ENCODE measurements at regions of chr17 and their contacts with region 1.

Region 1: GRCh38 chr17:28571255-28572122 is at the start of gene PIGS:
- DNase-seq: peak; percentile 91
- H3K4me3 Mint-ChIP-seq: peak within 1 kb of the TSS; percentile 93
- H3K27ac Mint-ChIP-seq: peak within 1 kb of the TSS; percentile 85
- H3K4me1 Mint-ChIP-seq: peaks cover 24% of the 10 kb centered on the region
- H3K27me3 Mint-ChIP-seq: no peaks in the 10 kb centered on the region
- CTCF ChIP-seq: no peak
- total RNA-seq, gene PIGS: 50.5 and 56.1 TPM in 2 replicates

Region 2: DNA sequence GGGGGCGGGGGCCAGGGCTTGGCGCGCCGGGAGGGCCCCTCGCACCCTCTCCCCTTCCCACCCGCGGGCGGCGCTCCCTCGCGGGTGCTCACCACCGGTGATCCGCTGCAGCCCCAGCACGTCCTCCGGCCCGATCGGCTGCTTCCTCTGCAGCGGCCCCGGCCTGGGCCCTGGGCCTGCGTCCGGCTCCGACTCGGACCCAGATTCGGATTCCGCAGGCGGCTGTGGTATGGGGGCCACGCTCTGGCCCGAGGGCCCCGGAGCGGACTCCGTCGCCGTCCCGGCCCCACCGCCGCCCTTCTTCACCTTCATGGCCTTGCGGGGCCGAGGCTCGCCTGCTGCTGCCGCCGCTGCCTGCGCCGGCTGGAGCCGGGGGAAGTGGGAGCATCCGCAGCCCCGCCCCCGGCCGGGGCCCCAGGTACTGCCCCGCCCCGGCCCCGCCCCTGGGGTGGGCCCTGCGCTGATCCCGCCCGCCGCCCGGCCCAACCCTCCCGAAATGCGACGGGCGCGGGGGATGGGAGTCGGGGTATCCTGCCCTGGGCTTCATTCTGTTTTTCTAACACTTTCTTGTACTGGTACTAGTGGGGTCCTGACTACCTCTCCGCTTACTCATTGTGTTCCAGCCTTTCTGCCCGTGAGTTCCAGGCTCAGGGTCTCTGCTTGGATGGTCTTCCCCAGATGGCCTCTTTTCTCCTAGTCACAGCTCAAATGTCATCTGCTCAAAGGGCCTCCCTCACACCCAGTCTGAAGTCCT is 19.1 kb before region 1 on chr17 and contains the start of gene UNC119:
- CTCF ChIA-PET with region 1: interaction called, 4 read pairs
- POLR2A ChIA-PET with region 1: interaction called, 18 read pairs
- intact Hi-C with region 1: no loop called
- DNase-seq: peak; percentile 74
- H3K4me3 Mint-ChIP-seq: peak within 1 kb of the TSS; percentile 75
- H3K27ac Mint-ChIP-seq: no peak within 1 kb of the TSS
- H3K4me1 Mint-ChIP-seq: no peaks in the 10 kb centered on the region
- H3K27me3 Mint-ChIP-seq: no peaks in the 10 kb centered on the region
- CTCF ChIP-seq: no peak
- total RNA-seq, gene UNC119: 12.5 and 13.7 TPM in 2 replicates

Region 3: DNA sequence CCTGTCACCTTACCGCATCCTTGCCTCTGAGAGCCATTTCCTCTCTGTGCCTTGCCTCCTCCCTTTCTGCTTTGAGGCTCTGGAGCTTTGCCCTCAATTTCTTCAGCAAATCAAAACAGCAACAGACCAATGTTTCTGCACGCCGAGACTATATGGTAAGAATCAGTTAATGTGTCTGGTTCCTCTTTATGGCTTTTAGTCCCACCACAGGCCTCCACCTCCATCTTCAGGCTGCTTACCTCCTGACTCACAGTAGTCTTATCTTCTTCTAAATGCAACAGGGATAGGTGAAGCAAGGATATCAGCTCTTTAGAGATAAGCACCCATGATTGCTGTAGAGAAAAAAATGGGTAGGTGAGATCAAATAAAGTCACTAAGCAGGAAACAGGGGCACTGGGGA is 14.4 kb after region 1 on chr17:
- CTCF ChIA-PET with region 1: interaction called, 3 read pairs
- POLR2A ChIA-PET with region 1: interaction called, 19 read pairs
- intact Hi-C with region 1: no loop called
- DNase-seq: no peak
- H3K4me3 Mint-ChIP-seq: no peak overlapping the region
- H3K27ac Mint-ChIP-seq: no peak overlapping the region
- H3K4me1 Mint-ChIP-seq: no peaks in the 10 kb centered on the region
- H3K27me3 Mint-ChIP-seq: no peaks in the 10 kb centered on the region
- CTCF ChIP-seq: no peak

Region 4: GRCh38 chr17:28598799-28599310 is 27.4 kb after region 1 on chr17 and contains the start of gene SPAG5:
- CTCF ChIA-PET with region 1: interaction called, 4 read pairs
- POLR2A ChIA-PET with region 1: interaction called, 32 read pairs
- intact Hi-C with region 1: no loop called
- DNase-seq: peak; percentile 92
- H3K4me3 Mint-ChIP-seq: peak within 1 kb of the TSS; percentile 87
- H3K27ac Mint-ChIP-seq: peak within 1 kb of the TSS; percentile 90
- H3K4me1 Mint-ChIP-seq: peaks cover 21% of the 10 kb centered on the region
- H3K27me3 Mint-ChIP-seq: no peaks in the 10 kb centered on the region
- CTCF ChIP-seq: no peak
- total RNA-seq, gene SPAG5: 31.5 and 38.1 TPM in 2 replicates